Activated CD4-positive, alpha-beta T cell treated with anti-CD3 and anti-CD28 coated beads for 36 hours (primary cell): ENCODE measurements at regions of chr5 and their contacts with region 1.

Region 1: DNA sequence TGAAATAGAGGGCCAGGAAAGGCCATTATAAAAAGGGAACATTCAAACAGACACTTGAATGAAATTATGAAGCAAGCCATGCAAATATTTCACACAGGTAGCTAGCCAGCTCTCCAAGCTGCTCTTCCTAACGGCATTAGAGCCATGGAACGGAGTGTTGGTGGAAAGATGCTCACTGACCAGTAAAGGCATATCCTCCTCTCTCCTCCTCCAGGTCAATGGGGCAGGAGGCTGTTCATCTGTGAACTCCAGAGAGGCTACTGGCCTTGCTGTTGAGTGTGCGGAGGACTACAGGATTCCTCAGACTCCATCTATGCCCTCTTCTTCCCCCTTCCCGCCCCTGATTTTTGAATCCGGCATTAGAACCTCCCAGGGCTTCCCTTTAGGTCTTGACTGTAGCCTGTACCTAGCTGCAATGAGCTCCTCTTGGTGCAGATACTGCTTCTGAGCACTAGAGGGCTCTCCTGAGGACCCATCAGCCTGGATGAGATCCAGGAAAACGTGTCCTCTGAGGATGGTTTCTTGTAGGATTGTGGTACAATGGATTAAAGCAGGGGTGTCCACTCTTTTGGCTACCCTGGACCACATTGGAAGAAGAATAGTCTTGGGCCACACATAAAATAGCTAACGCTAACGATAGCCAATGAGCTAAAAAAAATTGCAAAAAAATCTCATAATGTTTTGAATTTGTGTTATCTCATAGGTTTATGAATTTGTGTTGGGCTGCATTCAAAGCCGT is 162.2 kb downstream of the SREK1 start:
- DNase-seq: peak; percentile 45
- ATAC-seq: peak; percentile 73
- H3K4me3 Mint-ChIP-seq: no peak overlapping the region
- H3K27ac Mint-ChIP-seq: no peak overlapping the region
- H3K4me1 Mint-ChIP-seq: peaks cover 2% of the 10 kb centered on the region
- H3K27me3 Mint-ChIP-seq: peaks cover 8% of the 10 kb centered on the region

Region 2: GRCh38 chr5:66337626-66338226 is 31.5 kb after region 1 on chr5:
- CTCF ChIA-PET with region 1: interaction called, 13 read pairs
- POLR2A ChIA-PET with region 1: no interaction called
- intact Hi-C with region 1: no loop called
- DNase-seq: no peak
- ATAC-seq: no peak
- H3K4me3 Mint-ChIP-seq: no peak overlapping the region
- H3K27ac Mint-ChIP-seq: no peak overlapping the region
- H3K4me1 Mint-ChIP-seq: no peaks in the 10 kb centered on the region
- H3K27me3 Mint-ChIP-seq: peaks cover 11% of the 10 kb centered on the region

Region 3: DNA sequence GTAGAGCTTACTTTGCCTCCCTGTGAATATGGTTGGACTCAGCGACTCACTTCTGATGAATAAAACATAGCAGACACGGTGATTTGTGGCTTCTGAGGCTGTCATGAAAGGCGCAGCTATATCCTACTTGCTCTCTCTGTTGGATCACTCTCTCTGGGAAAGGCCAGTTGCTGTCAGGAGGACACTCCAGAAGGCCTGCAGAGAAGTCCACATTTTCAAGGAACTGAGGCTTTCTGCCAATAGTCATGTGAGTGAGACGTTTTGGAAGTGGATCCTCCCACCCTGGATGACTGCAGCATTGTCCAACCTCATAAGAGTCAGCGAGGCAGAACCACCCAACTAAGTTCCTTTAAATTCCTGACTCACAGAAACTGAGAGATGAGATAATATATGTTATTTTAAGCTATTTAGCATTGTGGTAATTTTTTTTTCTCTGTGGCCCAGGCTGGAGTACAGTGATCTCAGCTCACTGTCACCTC is 134.0 kb after region 1 on chr5:
- CTCF ChIA-PET with region 1: interaction called, 9 read pairs
- POLR2A ChIA-PET with region 1: interaction called, 4 read pairs
- intact Hi-C with region 1: loop called in 1 of 2 experiments (anchors 5 kb)
- DNase-seq: peak; percentile 55
- ATAC-seq: peak; percentile 98
- H3K4me3 Mint-ChIP-seq: no peak overlapping the region
- H3K27ac Mint-ChIP-seq: no peak overlapping the region
- H3K4me1 Mint-ChIP-seq: peaks cover 15% of the 10 kb centered on the region
- H3K27me3 Mint-ChIP-seq: peaks cover 2% of the 10 kb centered on the region

Region 4: DNA sequence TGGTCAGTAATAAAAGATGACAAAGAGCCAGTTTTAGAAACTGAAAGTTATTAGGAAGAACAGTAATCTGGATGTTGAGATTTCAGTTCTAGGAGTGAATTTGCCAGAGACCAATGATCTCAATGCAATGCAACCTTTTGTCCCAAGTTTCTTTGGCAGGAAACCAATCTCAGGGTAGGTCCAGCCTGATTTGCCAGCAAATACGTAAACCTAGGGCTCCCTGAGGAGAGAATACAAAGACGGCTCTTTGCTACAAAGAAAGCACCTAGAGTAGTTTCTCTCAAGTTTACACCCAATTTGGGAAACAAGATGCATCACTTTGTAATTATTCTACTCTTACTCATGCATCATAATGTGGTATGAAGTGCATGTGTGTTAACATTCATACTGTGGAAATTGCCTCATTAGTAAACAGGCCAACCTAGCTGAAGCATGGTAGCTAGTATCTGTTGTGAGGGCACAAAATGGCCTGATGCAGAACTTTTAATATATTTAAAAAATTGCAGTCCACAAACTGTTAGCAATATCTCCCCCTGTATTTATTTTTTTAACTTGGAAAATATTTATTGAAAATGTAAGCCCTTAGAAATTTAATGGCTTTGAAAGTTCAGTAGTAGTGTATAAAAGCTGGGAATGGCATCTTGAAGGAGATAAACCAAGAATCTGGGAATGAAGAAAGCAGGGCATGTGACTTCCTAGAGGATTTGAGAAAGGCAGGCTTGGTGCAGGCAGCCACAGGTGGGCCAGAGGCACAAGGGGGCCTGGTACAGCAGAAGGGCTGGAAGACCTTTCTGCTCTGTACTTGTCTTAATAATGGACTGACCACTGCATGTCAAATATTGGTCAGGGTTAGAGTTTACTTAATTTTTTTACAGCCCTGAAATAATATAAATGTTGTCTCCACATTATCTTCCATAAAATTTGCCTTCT is 349.4 kb after region 1 on chr5:
- CTCF ChIA-PET with region 1: interaction called, 3 read pairs
- POLR2A ChIA-PET with region 1: no interaction called
- intact Hi-C with region 1: loop called in 1 of 2 experiments (anchors 5 kb)
- DNase-seq: no peak
- ATAC-seq: no peak
- H3K4me3 Mint-ChIP-seq: no peak overlapping the region
- H3K27ac Mint-ChIP-seq: no peak overlapping the region
- H3K4me1 Mint-ChIP-seq: no peaks in the 10 kb centered on the region
- H3K27me3 Mint-ChIP-seq: peaks cover 8% of the 10 kb centered on the region

Region 5: DNA sequence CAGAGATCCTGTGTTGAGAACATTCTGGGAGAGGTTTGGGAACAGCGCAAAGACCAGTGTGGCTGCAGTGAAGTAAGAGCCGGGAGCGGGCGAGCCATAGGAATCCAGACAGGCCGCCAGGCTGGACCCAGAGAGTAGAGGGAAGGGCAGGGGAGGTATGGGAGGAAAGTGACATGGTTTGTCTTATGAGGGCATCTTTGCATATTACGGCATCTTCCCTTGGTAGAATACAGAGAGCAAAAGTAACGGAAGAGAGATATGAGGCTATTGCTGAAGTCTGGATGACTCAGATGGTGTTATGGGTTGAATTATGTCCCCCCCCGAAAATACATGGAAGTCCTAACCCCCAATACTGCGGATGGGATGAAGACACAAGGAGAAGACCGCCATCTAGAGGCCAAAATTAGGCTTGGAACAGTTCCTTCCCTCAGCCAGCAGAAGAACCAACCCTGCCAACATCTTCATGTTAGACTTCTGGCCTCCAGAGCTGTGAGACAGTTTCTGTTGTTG is 558.1 kb after region 1 on chr5:
- CTCF ChIA-PET with region 1: interaction called, 3 read pairs
- POLR2A ChIA-PET with region 1: no interaction called
- intact Hi-C with region 1: loop called in 1 of 2 experiments (anchors 2 kb)
- DNase-seq: peak; percentile 37
- ATAC-seq: peak; percentile 65
- H3K4me3 Mint-ChIP-seq: no peak overlapping the region
- H3K27ac Mint-ChIP-seq: no peak overlapping the region
- H3K4me1 Mint-ChIP-seq: peaks cover 3% of the 10 kb centered on the region
- H3K27me3 Mint-ChIP-seq: peaks cover 27% of the 10 kb centered on the region

Region 6: GRCh38 chr5:66904189-66904588 is 597.9 kb after region 1 on chr5:
- CTCF ChIA-PET with region 1: no interaction called
- POLR2A ChIA-PET with region 1: no interaction called
- intact Hi-C with region 1: no loop called
- DNase-seq: no peak
- ATAC-seq: no peak
- H3K4me3 Mint-ChIP-seq: no peak overlapping the region
- H3K27ac Mint-ChIP-seq: no peak overlapping the region
- H3K4me1 Mint-ChIP-seq: peaks cover 3% of the 10 kb centered on the region
- H3K27me3 Mint-ChIP-seq: peaks cover 6% of the 10 kb centered on the region